Activated CD4-positive, alpha-beta T cell treated with anti-CD3 and anti-CD28 coated beads for 36 hours (primary cell): ENCODE measurements at regions of chr12 and their contacts with region 1.

Region 1: GRCh38 chr12:12611512-12612306 is at the start of gene CREBL2:
- DNase-seq: peak; percentile 92
- ATAC-seq: peak; percentile 77
- H3K4me3 Mint-ChIP-seq: peak within 1 kb of the TSS; percentile 93
- H3K27ac Mint-ChIP-seq: peak within 1 kb of the TSS; percentile 98
- H3K4me1 Mint-ChIP-seq: peaks cover 68% of the 10 kb centered on the region
- H3K27me3 Mint-ChIP-seq: no peaks in the 10 kb centered on the region
- total RNA-seq, gene CREBL2: 16.8 to 20.2 TPM

Region 2: DNA sequence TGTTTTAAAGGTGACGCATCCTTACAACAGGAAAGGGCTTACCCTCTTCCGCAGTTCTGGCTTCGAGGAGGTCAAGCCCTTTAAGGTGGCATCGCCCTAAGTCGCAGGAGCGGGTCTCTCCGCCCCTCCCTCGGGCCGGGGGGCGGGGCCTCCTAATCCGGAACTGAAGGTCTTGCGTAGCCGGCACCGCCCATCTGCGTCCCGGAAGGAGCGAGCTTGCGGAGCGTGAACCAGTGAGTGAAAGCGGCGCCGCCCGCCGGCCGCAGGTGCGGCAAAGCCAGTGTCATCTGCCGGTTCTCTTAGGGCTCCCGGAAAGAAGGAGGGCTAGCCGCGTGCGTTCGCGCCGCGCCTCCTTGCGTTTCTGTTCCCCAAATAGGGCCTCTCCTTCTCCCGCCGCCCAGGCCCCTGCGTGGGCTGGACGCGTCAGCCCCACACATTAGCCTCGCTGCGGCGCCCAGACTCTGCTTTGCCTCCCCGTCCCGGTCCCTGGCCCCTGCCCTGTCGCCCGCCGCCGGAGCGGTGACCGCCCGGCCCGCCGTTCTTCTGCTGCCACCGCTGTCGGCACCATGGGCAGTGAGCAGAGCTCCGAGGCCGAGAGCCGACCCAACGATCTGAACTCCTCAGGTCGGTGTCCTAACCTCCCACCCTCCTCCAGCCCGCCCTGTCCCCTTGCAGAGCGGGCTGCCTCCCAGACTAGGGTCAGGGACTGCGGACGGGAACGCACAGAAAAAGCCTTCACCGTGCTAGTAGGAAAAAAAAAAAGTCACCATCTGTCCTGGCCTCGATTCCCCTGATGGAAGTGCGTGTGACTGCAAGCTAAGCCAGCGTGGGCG is 254.6 kb before region 1 on chr12 and contains the start of gene BORCS5:
- CTCF ChIA-PET with region 1: interaction called, 3 read pairs
- POLR2A ChIA-PET with region 1: interaction called, 4 read pairs
- intact Hi-C with region 1: loop called (anchors 2 to 5 kb)
- DNase-seq: peak; percentile 99
- ATAC-seq: peak; percentile 94
- H3K4me3 Mint-ChIP-seq: peak within 1 kb of the TSS; percentile 98
- H3K27ac Mint-ChIP-seq: peak within 1 kb of the TSS; percentile 99
- H3K4me1 Mint-ChIP-seq: peaks cover 38% of the 10 kb centered on the region
- H3K27me3 Mint-ChIP-seq: no peaks in the 10 kb centered on the region
- total RNA-seq, gene BORCS5: 41.8 to 45.0 TPM

Region 3: GRCh38 chr12:12425616-12426015 is 186.1 kb before region 1 on chr12:
- CTCF ChIA-PET with region 1: no interaction called
- POLR2A ChIA-PET with region 1: interaction called, 10 read pairs
- intact Hi-C with region 1: no loop called
- DNase-seq: no peak
- ATAC-seq: peak; percentile 58
- H3K4me3 Mint-ChIP-seq: no peak overlapping the region
- H3K27ac Mint-ChIP-seq: no peak overlapping the region
- H3K4me1 Mint-ChIP-seq: peaks cover 46% of the 10 kb centered on the region
- H3K27me3 Mint-ChIP-seq: no peaks in the 10 kb centered on the region

Region 4: DNA sequence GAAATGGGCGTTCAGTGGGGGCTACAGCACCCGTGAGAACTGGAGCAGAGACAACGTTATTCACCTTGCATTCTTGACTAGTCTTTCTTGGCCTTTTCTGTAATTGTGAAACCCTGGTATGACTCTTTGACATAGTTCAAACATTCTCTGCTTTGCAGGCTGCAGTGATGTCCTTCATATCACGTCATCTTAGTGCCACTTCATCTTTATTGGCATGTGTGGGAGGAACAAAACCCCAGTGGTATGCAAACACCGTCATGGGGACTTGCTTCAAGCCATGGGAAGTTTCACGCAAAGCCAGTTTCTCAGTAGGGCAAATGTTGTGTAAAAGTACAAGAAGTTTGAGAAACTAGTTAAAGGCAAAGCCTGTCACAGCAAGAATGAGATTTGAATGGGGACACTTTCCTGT is 28.8 kb before region 1 on chr12:
- CTCF ChIA-PET with region 1: interaction called, 3 read pairs
- POLR2A ChIA-PET with region 1: interaction called, 5 read pairs
- intact Hi-C with region 1: loop called (anchors 1 kb)
- DNase-seq: peak; percentile 78
- ATAC-seq: peak; percentile 96
- H3K4me3 Mint-ChIP-seq: no peak overlapping the region
- H3K27ac Mint-ChIP-seq: peak overlapping the region; percentile 92
- H3K4me1 Mint-ChIP-seq: peaks cover 45% of the 10 kb centered on the region
- H3K27me3 Mint-ChIP-seq: no peaks in the 10 kb centered on the region